Activated CD8-positive, alpha-beta T cell treated with anti-CD3 and anti-CD28 coated beads for 36 hours (primary cell): ENCODE measurements at regions of chr11 and their contacts with region 1.

Region 1: GRCh38 chr11:64846998-64847666 is 2.7 kb upstream of the CDC42BPG start:
- DNase-seq: peak; percentile 94
- ATAC-seq: peak; percentile 63
- H3K4me3 Mint-ChIP-seq: no peak overlapping the region
- H3K27ac Mint-ChIP-seq: peak overlapping the region; percentile 30
- H3K4me1 Mint-ChIP-seq: peaks cover 58% of the 10 kb centered on the region
- H3K27me3 Mint-ChIP-seq: no peaks in the 10 kb centered on the region
- CTCF ChIP-seq: peak; percentile 94

Region 2: DNA sequence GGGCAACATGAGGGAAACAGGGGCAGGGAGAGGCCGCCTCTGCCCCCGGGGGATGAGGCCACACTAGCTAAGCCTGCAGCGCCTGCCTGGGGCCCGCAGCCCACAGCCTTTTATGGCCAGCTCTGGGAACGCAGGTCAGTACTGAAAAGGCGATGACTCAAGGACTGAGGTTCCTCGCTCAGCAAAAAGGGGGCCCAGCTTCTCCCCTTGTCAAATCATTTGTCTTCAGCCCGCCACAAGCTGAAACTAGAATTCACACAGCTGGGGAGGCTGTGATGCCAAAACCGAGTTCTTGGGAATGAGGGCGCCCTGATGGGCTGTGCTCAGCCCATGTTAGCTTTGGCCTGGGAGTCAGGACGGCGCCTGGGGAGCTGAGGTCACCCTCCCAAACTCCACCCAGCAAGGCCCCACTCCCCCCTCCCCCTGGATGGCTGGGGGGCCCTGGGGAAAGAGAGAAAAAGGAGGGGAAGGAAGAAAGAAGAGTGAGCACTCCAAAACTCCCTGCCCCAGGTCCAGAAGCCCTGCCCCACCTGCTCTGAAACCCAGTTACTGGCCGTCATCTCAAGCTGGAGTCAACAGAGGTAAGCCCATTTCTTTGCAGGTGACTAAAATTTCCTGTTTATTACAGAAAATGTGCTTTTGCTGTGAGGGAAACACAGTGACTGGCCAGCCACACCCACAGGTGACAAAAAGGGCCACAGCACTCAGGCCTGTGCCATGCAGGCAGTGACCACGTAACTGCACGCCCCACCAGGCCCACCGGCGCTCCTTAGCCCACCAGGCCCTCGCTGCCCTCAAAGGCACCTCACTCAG is 17.5 kb after region 1 on chr11:
- CTCF ChIA-PET with region 1: interaction called, 316 read pairs
- POLR2A ChIA-PET with region 1: interaction called, 320 read pairs
- intact Hi-C with region 1: no loop called
- DNase-seq: peak; percentile 89
- ATAC-seq: peak; percentile 61
- H3K4me3 Mint-ChIP-seq: peak overlapping the region; percentile 66
- H3K27ac Mint-ChIP-seq: peak overlapping the region; percentile 95
- H3K4me1 Mint-ChIP-seq: peaks cover 91% of the 10 kb centered on the region
- H3K27me3 Mint-ChIP-seq: no peaks in the 10 kb centered on the region
- CTCF ChIP-seq: no peak

Region 3: GRCh38 chr11:64878494-64879243 is 31.5 kb after region 1 on chr11 and contains the start of gene EHD1:
- CTCF ChIA-PET with region 1: interaction called, 1,168 read pairs
- POLR2A ChIA-PET with region 1: interaction called, 768 read pairs
- intact Hi-C with region 1: no loop called
- DNase-seq: peak; percentile 100
- ATAC-seq: peak; percentile 86
- H3K4me3 Mint-ChIP-seq: peak within 1 kb of the TSS; percentile 99
- H3K27ac Mint-ChIP-seq: peak within 1 kb of the TSS; percentile 96
- H3K4me1 Mint-ChIP-seq: peaks cover 65% of the 10 kb centered on the region
- H3K27me3 Mint-ChIP-seq: no peaks in the 10 kb centered on the region
- CTCF ChIP-seq: peak; percentile 32
- total RNA-seq, gene EHD1: 60.3 to 65.1 TPM

Region 4: GRCh38 chr11:64894070-64894796 is 47.1 kb after region 1 on chr11:
- CTCF ChIA-PET with region 1: interaction called, 1,168 read pairs
- POLR2A ChIA-PET with region 1: interaction called, 10 read pairs
- intact Hi-C with region 1: loop called (anchors 2 kb)
- DNase-seq: peak; percentile 97
- ATAC-seq: peak; percentile 99
- H3K4me3 Mint-ChIP-seq: no peak overlapping the region
- H3K27ac Mint-ChIP-seq: no peak overlapping the region
- H3K4me1 Mint-ChIP-seq: no peaks in the 10 kb centered on the region
- H3K27me3 Mint-ChIP-seq: no peaks in the 10 kb centered on the region
- CTCF ChIP-seq: peak; percentile 76

Region 5: DNA sequence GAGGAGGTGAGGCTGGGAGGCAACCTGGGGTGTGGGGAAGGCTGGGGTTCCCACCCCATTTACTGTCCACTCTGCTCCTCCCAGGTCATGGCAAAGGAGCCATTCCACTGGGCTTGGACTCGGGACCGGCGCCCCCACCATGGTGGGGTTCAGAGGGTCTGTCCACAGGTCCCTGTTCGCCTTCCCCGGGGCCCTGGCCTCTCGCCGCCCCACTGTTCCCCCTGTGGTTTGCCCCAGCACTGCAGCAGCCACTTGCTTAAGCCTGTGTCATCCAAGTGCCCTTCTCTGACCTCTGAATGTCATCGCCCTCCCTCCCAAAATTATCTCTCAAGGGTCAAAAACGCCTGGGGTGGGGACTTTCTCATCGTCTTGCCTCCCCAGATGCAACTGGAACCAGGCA is 325.5 kb after region 1 on chr11:
- CTCF ChIA-PET with region 1: no interaction called
- POLR2A ChIA-PET with region 1: no interaction called
- intact Hi-C with region 1: no loop called
- DNase-seq: no peak
- ATAC-seq: no peak
- H3K4me3 Mint-ChIP-seq: no peak overlapping the region
- H3K27ac Mint-ChIP-seq: no peak overlapping the region
- H3K4me1 Mint-ChIP-seq: no peaks in the 10 kb centered on the region
- H3K27me3 Mint-ChIP-seq: no peaks in the 10 kb centered on the region
- CTCF ChIP-seq: no peak